ENCODE measurements at regions of chr19 and their contacts with region 1.

Region 1: DNA sequence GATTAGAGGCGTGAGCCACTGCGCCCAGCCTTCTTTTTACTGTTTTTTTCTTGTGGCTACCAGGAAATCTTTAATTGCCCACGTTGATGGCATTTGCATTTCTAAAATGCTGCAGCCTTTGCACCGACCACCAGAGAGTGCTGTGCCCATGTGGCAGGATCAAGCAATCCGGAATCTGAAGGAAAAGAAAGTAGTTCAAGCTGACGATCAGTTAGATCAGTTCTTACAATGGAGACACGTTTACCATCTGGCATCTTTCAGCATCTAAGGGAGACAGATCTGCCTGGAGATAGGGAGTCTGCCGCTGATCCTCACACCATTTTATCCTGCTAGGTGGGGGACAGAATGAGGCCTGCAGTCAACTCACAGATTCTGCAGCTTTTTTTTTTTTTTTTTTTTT is 19.9 kb downstream of the TINCR start:
- DNase-seq: peak; percentile 36
- H3K27ac ChIP-seq: no peak overlapping the region
- CTCF ChIP-seq: peak; percentile 40

Region 2: GRCh38 chr19:5394551-5395505 is 153.1 kb before region 1 on chr19:
- CTCF ChIA-PET with region 1: interaction called, 10 read pairs
- POLR2A ChIA-PET with region 1: no interaction called
- DNase-seq: no peak
- H3K27ac ChIP-seq: no peak overlapping the region
- CTCF ChIP-seq: no peak

Region 3: GRCh38 chr19:5580161-5580571 is 32.3 kb after region 1 on chr19:
- CTCF ChIA-PET with region 1: interaction called, 20 read pairs
- POLR2A ChIA-PET with region 1: no interaction called
- DNase-seq: no peak
- H3K27ac ChIP-seq: no peak overlapping the region
- CTCF ChIP-seq: no peak

Region 4: GRCh38 chr19:5707576-5708575 is 160.0 kb after region 1 on chr19:
- CTCF ChIA-PET with region 1: no interaction called
- POLR2A ChIA-PET with region 1: no interaction called
- DNase-seq: no peak
- H3K27ac ChIP-seq: no peak overlapping the region
- CTCF ChIP-seq: no peak